Activated CD4-positive, alpha-beta memory T cell treated with anti-CD3 and anti-CD28 coated beads for 36 hours (primary cell): ENCODE measurements at regions of chr7 and their contacts with region 1.

Region 1: GRCh38 chr7:55557666-55558188 is 14.6 kb downstream of the VOPP1 start:
- DNase-seq: peak; percentile 62
- H3K4me3 Mint-ChIP-seq: peak overlapping the region; percentile 13
- H3K27ac Mint-ChIP-seq: peak overlapping the region; percentile 74
- H3K4me1 Mint-ChIP-seq: peaks cover 93% of the 10 kb centered on the region
- H3K27me3 Mint-ChIP-seq: no peaks in the 10 kb centered on the region

Region 2: DNA sequence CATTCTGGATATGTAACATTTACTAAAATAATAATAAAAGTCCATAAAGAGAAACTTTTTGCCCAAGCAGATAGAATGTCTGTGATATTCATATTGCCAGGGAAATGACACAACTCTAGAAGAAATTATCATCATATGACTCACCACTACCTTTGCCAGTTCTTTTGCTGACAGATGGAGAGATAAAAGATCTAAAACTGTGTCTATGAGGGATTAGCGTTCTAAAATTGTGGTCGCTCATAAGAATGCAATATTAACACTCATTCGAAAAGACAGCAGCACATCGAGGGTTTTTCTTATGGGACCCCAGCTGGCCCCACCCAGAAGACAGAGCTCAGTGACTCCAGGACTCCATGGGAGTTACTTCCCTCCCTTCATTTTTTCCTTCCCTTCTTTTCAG is 209.2 kb before region 1 on chr7:
- CTCF ChIA-PET with region 1: no interaction called
- POLR2A ChIA-PET with region 1: no interaction called
- intact Hi-C with region 1: no loop called
- DNase-seq: no peak
- H3K4me3 Mint-ChIP-seq: no peak overlapping the region
- H3K27ac Mint-ChIP-seq: no peak overlapping the region
- H3K4me1 Mint-ChIP-seq: peaks cover 10% of the 10 kb centered on the region
- H3K27me3 Mint-ChIP-seq: peaks cover 20% of the 10 kb centered on the region

Region 3: GRCh38 chr7:55509322-55509721 is 48.4 kb before region 1 on chr7:
- CTCF ChIA-PET with region 1: no interaction called
- POLR2A ChIA-PET with region 1: no interaction called
- intact Hi-C with region 1: loop called (anchors 2 kb)
- DNase-seq: no peak
- H3K4me3 Mint-ChIP-seq: no peak overlapping the region
- H3K27ac Mint-ChIP-seq: peak overlapping the region; percentile 45
- H3K4me1 Mint-ChIP-seq: peaks cover 79% of the 10 kb centered on the region
- H3K27me3 Mint-ChIP-seq: no peaks in the 10 kb centered on the region

Region 4: DNA sequence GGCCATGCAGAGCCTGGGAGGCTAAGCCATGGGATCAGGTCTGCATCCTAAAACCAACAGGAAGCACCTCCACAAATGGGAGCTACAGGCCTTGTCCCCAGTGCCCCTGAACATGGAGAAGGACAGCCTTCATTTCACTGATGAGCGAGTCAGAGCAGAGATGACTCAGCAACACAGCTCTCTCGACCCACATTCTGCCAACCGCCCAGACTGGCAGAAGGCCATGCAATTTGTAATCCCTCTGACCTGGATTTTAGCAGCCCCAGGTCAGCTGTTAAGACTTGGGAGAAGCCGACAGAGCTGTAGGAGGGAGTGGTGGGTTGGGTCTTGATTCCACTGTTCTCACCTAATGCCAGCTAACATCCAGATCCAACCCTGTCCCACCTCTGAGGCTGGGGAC is 10.9 kb before region 1 on chr7:
- CTCF ChIA-PET with region 1: no interaction called
- POLR2A ChIA-PET with region 1: no interaction called
- intact Hi-C with region 1: loop called (anchors 1 kb)
- DNase-seq: peak; percentile 76
- H3K4me3 Mint-ChIP-seq: no peak overlapping the region
- H3K27ac Mint-ChIP-seq: peak overlapping the region; percentile 42
- H3K4me1 Mint-ChIP-seq: peaks cover 75% of the 10 kb centered on the region
- H3K27me3 Mint-ChIP-seq: no peaks in the 10 kb centered on the region